Right cardiac atrium (tissue), 5 donors: ENCODE measurements at regions of chr7 and their contacts with region 1.

Region 1: GRCh38 chr7:7968543-7969305 is at the start of gene GLCCI1:
- DNase-seq: peak; percentile 96 to 98 (median 98)
- ATAC-seq: peak; percentile 99 to 100
- H3K4me3 ChIP-seq: peak within 1 kb of the TSS; percentile 79
- H3K27ac ChIP-seq: peak within 1 kb of the TSS; percentile 94
- H3K4me1 ChIP-seq: no peaks in the 10 kb centered on the region
- H3K27me3 ChIP-seq: no peaks in the 10 kb centered on the region
- total RNA-seq, gene GLCCI1: 4.7 to 8.3 (median 6.8) TPM

Region 2: GRCh38 chr7:8284606-8285005 is 315.9 kb after region 1 on chr7:
- intact Hi-C with region 1: loop called in 1 of 4 experiments (anchors 10 kb)
- DNase-seq: peak in 1 of 3 donors; percentile 24
- ATAC-seq: no peak
- H3K4me3 ChIP-seq: no peak overlapping the region
- H3K27ac ChIP-seq: peak overlapping the region; percentile 77
- H3K4me1 ChIP-seq: no peaks in the 10 kb centered on the region
- H3K27me3 ChIP-seq: no peaks in the 10 kb centered on the region